Calu3 (cell line): ENCODE measurements at regions of chr18 and their contacts with region 1.

Region 1: DNA sequence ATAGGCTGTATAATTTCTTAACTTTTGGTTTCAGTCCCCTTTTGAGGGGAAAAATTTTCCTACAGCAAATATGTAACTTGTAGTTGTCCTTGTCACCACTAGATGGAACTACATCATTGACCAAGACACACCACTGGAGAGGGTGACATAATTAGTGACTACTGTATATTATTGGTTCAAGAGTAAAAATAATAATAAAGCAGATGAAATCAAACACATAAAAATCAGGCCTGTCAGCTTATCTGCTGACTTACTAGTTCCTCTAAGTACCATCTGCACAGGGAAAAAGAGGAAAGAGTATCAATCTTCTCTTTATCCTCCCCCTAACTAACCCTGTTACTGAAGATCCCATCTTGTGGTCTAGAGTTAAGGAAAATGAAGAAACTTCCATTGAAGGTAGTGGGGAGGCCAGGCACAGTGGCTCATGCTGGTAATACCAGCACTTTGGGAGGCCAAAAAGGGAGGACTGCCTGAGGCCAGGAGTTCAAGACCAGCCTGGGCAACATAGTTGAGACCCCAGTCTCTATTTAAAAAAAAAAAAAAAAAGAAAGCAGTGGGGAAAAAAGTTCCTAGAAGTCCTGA is 29.6 kb upstream of the ENOSF1 start:
- DNase-seq: no peak
- H3K4me3 Mint-ChIP-seq: no peak overlapping the region
- H3K27ac Mint-ChIP-seq: no peak overlapping the region
- H3K4me1 Mint-ChIP-seq: no peaks in the 10 kb centered on the region
- H3K27me3 Mint-ChIP-seq: no peaks in the 10 kb centered on the region
- CTCF ChIP-seq: peak; percentile 63

Region 2: DNA sequence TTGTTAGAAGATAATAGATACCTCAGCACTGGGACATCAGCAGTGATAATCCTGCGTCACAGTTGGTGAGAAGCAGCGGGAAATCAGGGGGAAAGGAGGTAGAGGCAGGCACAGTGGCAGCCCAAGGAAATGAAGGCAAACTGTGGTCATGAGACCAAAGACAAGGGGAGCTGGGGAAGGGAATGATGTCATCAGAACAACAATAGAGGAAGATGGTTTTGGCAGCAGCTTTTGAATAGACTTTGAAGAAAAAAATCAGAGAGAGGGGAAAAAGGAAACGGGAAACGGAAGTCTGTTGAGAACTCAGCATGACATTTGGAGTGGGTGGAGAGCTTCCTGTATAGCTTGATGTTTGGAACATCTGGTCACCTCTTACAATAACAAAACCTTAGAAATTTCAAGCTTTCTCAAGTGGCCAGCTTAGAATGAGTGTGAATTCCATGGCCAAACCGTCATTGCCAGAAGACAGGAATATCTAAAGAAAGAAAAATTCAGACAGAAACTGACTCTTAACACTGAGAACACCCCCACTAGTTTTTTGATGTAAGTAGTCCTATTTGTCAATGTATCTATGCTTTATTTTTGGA is 88.4 kb after region 1 on chr18:
- CTCF ChIA-PET with region 1: interaction called, 11 read pairs
- intact Hi-C with region 1: loop called (anchors 1 kb)
- DNase-seq: no peak
- H3K4me3 Mint-ChIP-seq: no peak overlapping the region
- H3K27ac Mint-ChIP-seq: no peak overlapping the region
- H3K4me1 Mint-ChIP-seq: peaks cover 22% of the 10 kb centered on the region
- H3K27me3 Mint-ChIP-seq: peaks cover 13% of the 10 kb centered on the region
- CTCF ChIP-seq: no peak